ENCODE measurements at regions of chr3 and their contacts with region 1.

Region 1: DNA sequence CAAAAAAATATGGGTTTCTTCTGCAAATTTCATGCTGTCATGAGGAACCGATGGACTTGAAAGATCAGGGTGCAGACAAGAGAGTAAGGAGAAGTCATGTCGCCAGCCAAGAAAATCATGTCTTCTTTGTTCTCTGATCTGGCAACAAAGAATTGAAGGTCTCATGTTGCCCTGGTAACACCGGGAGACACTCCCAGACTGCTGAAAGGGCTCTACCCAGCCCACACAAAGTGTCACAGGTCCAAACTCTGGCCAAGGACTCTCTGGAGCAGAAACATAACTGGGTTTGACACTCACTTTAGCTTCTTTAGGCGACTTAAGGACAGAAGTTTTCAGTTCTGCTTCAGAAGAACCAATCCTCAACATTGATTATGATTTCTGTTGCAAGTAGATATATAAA is 42.9 kb downstream of the SIDT1 start:
- DNase-seq: no peak
- ATAC-seq: no peak
- H3K4me3 ChIP-seq: no peak overlapping the region
- H3K4me3 Mint-ChIP-seq: no peak overlapping the region
- H3K27ac ChIP-seq: no peak overlapping the region
- H3K27ac Mint-ChIP-seq: peak overlapping the region; percentile 62 to 73
- H3K4me1 ChIP-seq: no peaks in the 10 kb centered on the region
- H3K4me1 Mint-ChIP-seq: peaks cover 9 to 11% (median 9%) of the 10 kb centered on the region in 3 donors
- H3K27me3 ChIP-seq: no peaks in the 10 kb centered on the region
- H3K27me3 Mint-ChIP-seq: no peaks in the 10 kb centered on the region

Region 2: DNA sequence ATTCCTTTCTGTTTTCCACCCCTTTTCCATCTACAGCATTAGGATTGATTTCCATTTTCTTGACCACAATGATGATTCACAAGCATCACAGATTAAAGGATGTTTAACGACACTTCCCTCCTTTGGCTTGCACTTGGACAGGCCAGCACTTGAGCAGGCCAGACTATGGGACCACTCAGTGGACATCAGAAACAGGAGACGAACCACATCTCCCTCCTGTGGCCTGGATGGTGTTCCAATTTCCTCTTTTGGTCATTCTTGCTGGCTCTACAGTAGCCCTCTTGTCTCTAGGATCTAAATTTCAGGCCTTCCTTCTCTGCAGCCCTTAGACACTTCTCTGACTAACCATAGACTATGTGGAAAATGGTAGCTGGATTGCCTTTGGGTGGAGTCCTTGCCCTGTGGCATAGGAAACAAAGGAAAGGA is 442.6 kb before region 1 on chr3:
- CTCF ChIA-PET with region 1: no interaction called
- POLR2A ChIA-PET with region 1: no interaction called
- DNase-seq: no peak
- ATAC-seq: no peak
- H3K4me3 ChIP-seq: no peak overlapping the region
- H3K4me3 Mint-ChIP-seq: no peak overlapping the region
- H3K27ac ChIP-seq: no peak overlapping the region
- H3K27ac Mint-ChIP-seq: no peak overlapping the region
- H3K4me1 ChIP-seq: no peaks in the 10 kb centered on the region
- H3K4me1 Mint-ChIP-seq: no peaks in the 10 kb centered on the region
- H3K27me3 ChIP-seq: no peaks in the 10 kb centered on the region
- H3K27me3 Mint-ChIP-seq: no peaks in the 10 kb centered on the region

Region 3: GRCh38 chr3:113468539-113468938 is 106.7 kb before region 1 on chr3:
- CTCF ChIA-PET with region 1: no interaction called
- POLR2A ChIA-PET with region 1: no interaction called
- DNase-seq: no peak
- ATAC-seq: no peak
- H3K4me3 ChIP-seq: no peak overlapping the region
- H3K4me3 Mint-ChIP-seq: no peak overlapping the region
- H3K27ac ChIP-seq: no peak overlapping the region
- H3K27ac Mint-ChIP-seq: no peak overlapping the region
- H3K4me1 ChIP-seq: no peaks in the 10 kb centered on the region
- H3K4me1 Mint-ChIP-seq: peaks cover 3 to 5% (median 5%) of the 10 kb centered on the region in 3 donors
- H3K27me3 ChIP-seq: no peaks in the 10 kb centered on the region
- H3K27me3 Mint-ChIP-seq: no peaks in the 10 kb centered on the region

Region 4: GRCh38 chr3:113514265-113514769 is 60.9 kb before region 1 on chr3:
- CTCF ChIA-PET with region 1: interaction called, 3 to 25 read pairs
- POLR2A ChIA-PET with region 1: interaction called in 1 of 2 experiments, 5 read pairs
- DNase-seq: no peak
- ATAC-seq: peak in 1 of 4 experiments; percentile 4
- H3K4me3 ChIP-seq: peak overlapping the region; percentile 91 to 94
- H3K4me3 Mint-ChIP-seq: no peak overlapping the region
- H3K27ac ChIP-seq: peak overlapping the region; percentile 87
- H3K27ac Mint-ChIP-seq: no peak overlapping the region
- H3K4me1 ChIP-seq: peaks cover 13 to 15% of the 10 kb centered on the region in 2 experiments
- H3K4me1 Mint-ChIP-seq: peaks cover 19 to 23% (median 21%) of the 10 kb centered on the region in 3 donors
- H3K27me3 ChIP-seq: peaks cover 0 to 4% of the 10 kb centered on the region in 2 experiments
- H3K27me3 Mint-ChIP-seq: peaks cover 7 to 22% of the 10 kb centered on the region in 2 donors

Region 5: DNA sequence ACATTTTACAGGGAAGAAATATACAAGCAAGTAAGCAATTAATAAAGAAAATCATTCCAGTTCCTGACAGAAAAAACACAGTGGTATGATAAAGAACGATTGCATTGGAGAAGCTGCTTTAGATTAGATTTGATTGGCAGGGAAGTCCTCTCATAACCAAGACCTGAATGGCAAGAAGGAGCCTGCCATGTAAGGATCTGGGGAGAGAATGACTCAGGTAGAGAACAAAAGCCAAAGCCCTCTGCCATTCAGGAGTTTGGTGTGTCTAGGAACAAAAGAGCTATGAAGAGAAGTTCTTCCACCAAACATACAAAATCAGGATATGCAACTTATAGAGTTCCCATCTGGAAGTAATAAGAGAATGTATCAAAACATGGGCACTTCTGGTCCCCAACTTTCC is 14.8 kb after region 1 on chr3:
- CTCF ChIA-PET with region 1: interaction called, 6 to 11 read pairs
- POLR2A ChIA-PET with region 1: no interaction called
- DNase-seq: no peak
- ATAC-seq: no peak
- H3K4me3 ChIP-seq: no peak overlapping the region
- H3K4me3 Mint-ChIP-seq: no peak overlapping the region
- H3K27ac ChIP-seq: no peak overlapping the region
- H3K27ac Mint-ChIP-seq: no peak overlapping the region
- H3K4me1 ChIP-seq: no peaks in the 10 kb centered on the region
- H3K4me1 Mint-ChIP-seq: peaks cover 8 to 19% (median 11%) of the 10 kb centered on the region in 3 donors
- H3K27me3 ChIP-seq: no peaks in the 10 kb centered on the region
- H3K27me3 Mint-ChIP-seq: no peaks in the 10 kb centered on the region

Measured in T-cell (primary cell).